ENCODE measurements at regions of chr7 and their contacts with region 1.

Region 1: DNA sequence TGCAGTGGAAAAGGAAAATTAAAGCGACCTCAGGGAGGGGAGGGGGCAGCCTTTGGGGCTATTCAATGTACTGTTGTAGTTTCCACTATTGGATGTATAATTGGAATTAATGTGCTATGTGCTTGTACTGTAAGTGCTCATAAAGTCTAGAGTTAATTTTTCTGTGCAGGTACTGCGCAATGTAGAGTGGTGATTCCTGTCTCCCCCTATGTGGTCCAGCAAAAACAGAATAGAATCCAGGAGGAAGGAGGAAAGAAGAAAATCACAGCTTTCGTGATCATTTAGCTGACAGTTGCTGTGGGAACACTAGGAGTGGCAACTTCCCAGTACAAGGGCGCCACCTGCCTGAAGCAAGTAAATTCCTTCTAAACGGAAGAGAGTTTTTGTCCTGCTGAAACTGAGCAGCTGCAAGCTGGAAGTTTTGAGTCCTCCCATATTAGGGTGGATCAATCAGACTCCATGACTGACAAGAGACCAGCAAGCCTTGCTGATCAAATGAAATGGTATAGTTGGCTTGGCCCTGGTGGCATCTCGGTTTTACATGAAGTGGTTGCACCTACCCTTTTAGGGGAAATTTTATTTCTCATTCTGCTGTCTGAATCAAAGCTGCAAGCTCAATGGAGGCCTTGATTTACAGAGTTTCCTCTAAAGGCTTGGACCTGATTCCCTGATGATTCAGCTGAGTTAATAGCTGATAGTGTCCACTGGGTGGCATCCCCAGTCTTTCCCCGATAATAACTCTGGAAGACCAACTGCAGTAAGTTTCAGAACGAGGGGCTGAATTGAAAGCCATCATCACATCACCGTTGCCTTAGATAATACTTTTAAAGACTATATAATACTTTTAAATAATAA is 299.8 kb downstream of the HGF start:
- DNase-seq: peak in 1 of 2 donors; percentile 20
- ATAC-seq: peak in 1 of 3 donors; percentile 38
- H3K4me3 ChIP-seq: no peak overlapping the region
- H3K4me3 Mint-ChIP-seq: no peak overlapping the region
- H3K27ac ChIP-seq: no peak overlapping the region
- H3K27ac Mint-ChIP-seq: no peak overlapping the region
- H3K4me1 ChIP-seq: no peaks in the 10 kb centered on the region
- H3K4me1 Mint-ChIP-seq: no peaks in the 10 kb centered on the region
- H3K27me3 ChIP-seq: no peaks in the 10 kb centered on the region
- H3K27me3 Mint-ChIP-seq: no peaks in the 10 kb centered on the region
- CTCF ChIP-seq: no peak

Region 2: DNA sequence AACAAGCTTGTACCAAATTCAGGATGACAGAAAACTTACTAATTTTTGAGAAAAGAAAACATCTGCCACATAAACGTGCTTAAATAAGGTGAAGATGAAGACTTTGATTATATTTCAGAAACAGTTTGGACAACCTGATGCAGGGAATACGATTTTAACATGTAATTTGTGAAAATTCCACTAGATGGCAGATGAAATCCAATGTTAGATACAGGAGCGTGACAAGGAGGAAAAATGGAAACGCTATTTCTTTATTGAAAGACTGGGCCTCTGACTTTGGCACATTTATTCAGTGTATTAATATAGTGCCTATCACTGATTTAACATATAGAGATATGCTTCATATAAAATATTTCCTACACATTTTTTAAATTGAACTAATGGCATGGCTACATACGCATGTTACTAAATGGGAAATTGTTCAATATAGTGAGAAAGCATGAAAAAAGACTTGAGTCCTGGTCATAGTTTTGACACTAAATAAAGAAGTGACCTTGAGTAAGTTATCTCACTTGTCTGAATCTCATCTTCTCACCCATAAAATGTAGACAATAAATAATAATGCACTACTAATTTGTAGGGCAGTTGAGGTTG is 771.0 kb before region 1 on chr7:
- intact Hi-C with region 1: loop called (anchors 5 kb)
- DNase-seq: peak in 1 of 2 donors; percentile 17
- ATAC-seq: no peak
- H3K4me3 ChIP-seq: no peak overlapping the region
- H3K4me3 Mint-ChIP-seq: no peak overlapping the region
- H3K27ac ChIP-seq: no peak overlapping the region
- H3K27ac Mint-ChIP-seq: no peak overlapping the region
- H3K4me1 ChIP-seq: no peaks in the 10 kb centered on the region
- H3K4me1 Mint-ChIP-seq: no peaks in the 10 kb centered on the region
- H3K27me3 ChIP-seq: no peaks in the 10 kb centered on the region
- H3K27me3 Mint-ChIP-seq: no peaks in the 10 kb centered on the region
- CTCF ChIP-seq: peak; percentile 59